ENCODE measurements at regions of chr6 and their contacts with region 1.

Region 1: DNA sequence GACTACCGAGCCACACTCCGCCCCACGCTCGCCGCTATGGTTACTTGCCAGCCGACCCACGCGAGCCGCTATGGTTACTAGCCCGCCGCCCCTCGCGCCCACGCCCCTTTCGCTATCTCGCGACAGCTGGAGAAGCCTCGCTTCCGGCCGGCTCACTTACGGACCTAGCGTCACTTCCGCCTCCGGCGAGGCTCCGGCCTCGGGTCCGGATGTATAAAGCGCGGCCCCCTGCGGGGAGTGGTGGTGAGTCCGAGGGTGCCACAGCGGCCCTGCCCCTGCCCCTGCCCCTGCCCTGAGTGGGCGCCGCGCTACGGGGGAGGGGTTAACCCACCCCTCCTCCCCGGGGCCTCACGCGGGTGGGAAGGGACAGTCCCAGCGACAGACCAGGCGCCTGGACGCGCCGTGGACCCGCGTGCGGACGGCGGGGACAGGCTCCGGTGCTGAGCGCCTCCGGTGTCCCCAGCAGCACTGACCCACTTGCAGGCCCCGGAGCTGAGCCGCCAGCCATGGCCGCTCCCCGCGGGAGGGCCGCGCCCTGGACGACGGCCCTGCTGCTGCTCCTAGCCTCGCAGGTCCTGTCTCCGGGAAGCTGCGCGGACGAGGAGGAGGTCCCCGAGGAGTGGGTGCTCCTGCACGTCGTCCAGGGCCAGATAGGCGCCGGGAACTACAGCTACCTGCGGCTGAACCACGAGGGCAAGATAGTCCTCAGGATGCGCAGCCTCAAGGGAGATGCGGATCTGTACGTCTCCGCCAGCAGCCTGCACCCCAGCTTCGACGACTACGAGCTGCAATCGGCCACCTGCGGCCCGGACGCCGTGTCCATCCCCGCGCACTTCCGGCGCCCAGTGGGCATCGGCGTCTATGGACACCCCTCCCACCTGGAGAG is at the starts of genes C6orf120 and WDR27:
- DNase-seq: peak; percentile 96 to 98 (median 96)
- H3K4me3 ChIP-seq: peak within 1 kb of the TSS; percentile 76 to 98
- H3K4me3 Mint-ChIP-seq: peak within 1 kb of the TSS; percentile 91 to 97 (median 93)
- H3K27ac ChIP-seq: peak within 1 kb of the TSS; percentile 94
- H3K27ac Mint-ChIP-seq: peak within 1 kb of the TSS; percentile 92 to 97 (median 96)
- H3K4me1 ChIP-seq: peaks cover 50% of the 10 kb centered on the region
- H3K4me1 Mint-ChIP-seq: peaks cover 32 to 79% (median 52%) of the 10 kb centered on the region in 4 donors
- H3K27me3 ChIP-seq: no peaks in the 10 kb centered on the region
- H3K27me3 Mint-ChIP-seq: no peaks in the 10 kb centered on the region
- total RNA-seq, gene C6orf120: 32.9 to 35.9 TPM
- total RNA-seq, gene WDR27: 73.0 to 82.8 TPM

Region 2: GRCh38 chr6:168895102-168895812 is 806.9 kb before region 1 on chr6:
- CTCF ChIA-PET with region 1: no interaction called
- POLR2A ChIA-PET with region 1: interaction called, 3 read pairs
- intact Hi-C with region 1: loop called (anchors 5 kb)
- DNase-seq: peak; percentile 71 to 78 (median 74)
- H3K4me3 ChIP-seq: no peak overlapping the region
- H3K4me3 Mint-ChIP-seq: peak overlapping the region; percentile 40 to 87 (median 60)
- H3K27ac ChIP-seq: no peak overlapping the region
- H3K27ac Mint-ChIP-seq: peak overlapping the region in 5 of 7 donors; percentile 8 to 77 (median 53)
- H3K4me1 ChIP-seq: peaks cover 8% of the 10 kb centered on the region
- H3K4me1 Mint-ChIP-seq: peaks cover 9 to 28% (median 11%) of the 10 kb centered on the region in 4 donors
- H3K27me3 ChIP-seq: no peaks in the 10 kb centered on the region
- H3K27me3 Mint-ChIP-seq: peaks cover 3% of the 10 kb centered on the region in 2 donors

Region 3: GRCh38 chr6:169654598-169655391 is 47.4 kb before region 1 on chr6:
- CTCF ChIA-PET with region 1: no interaction called
- POLR2A ChIA-PET with region 1: interaction called, 15 read pairs
- intact Hi-C with region 1: loop called (anchors 1 kb)
- DNase-seq: peak; percentile 73 to 81 (median 78)
- H3K4me3 ChIP-seq: peak overlapping the region in 1 of 2 donors; percentile 81
- H3K4me3 Mint-ChIP-seq: peak overlapping the region; percentile 85 to 93 (median 92)
- H3K27ac ChIP-seq: peak overlapping the region; percentile 47
- H3K27ac Mint-ChIP-seq: peak overlapping the region; percentile 78 to 96 (median 83)
- H3K4me1 ChIP-seq: peaks cover 4% of the 10 kb centered on the region
- H3K4me1 Mint-ChIP-seq: peaks cover 0 to 17% (median 10%) of the 10 kb centered on the region in 4 donors
- H3K27me3 ChIP-seq: no peaks in the 10 kb centered on the region
- H3K27me3 Mint-ChIP-seq: no peaks in the 10 kb centered on the region

Region 4: DNA sequence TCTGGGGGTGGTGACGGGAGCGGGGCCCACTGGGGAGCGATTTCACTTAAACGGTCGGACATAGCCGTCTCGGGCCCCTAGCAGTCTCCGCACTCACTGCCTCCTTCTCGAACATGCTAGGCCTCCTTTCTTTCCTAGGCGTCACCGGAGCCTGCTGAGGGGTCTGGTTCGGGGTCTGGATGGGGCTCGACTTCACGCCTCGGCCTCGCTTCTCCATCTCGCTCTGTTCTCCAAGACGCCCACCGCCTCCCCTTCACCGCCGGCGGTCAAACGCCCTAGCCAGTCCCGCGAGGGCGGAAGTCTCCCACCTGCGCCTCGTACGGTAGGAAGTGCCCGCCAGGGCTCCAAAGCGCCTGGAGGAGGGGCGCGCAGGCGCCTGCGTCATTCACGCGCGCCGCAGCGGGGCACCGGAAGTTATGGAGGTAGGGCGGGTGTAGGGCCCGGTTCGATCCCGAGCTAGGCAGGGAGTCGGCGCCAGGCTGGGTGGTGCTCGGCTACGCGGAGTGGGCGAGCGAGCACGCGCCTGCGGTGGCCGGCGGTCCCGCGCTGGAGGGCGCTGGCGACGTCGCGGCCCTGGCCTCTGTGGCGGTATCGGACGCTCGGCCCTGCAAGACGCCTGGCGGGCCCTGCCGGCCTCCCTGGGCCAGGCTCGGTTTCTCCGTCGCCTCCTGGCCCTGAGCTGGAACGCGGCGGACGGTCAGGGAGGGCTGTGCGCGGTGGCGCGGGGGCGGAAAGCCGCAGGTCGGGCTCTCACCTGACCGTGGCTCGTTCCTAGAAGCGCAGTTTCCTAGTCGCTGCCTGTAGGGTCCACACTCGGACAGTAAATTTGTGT is 49.3 kb after region 1 on chr6 and contains the starts of genes DYNLT2 and ERMARD:
- CTCF ChIA-PET with region 1: interaction called, 4 read pairs
- POLR2A ChIA-PET with region 1: interaction called, 74 read pairs
- intact Hi-C with region 1: loop called (anchors 1 kb)
- DNase-seq: peak; percentile 93 to 96 (median 94)
- H3K4me3 ChIP-seq: peak within 1 kb of the TSS; percentile 80 to 90
- H3K4me3 Mint-ChIP-seq: peak within 1 kb of the TSS; percentile 97 to 100 (median 99)
- H3K27ac ChIP-seq: peak within 1 kb of the TSS; percentile 93
- H3K27ac Mint-ChIP-seq: peak within 1 kb of the TSS; percentile 99 to 100 (median 100)
- H3K4me1 ChIP-seq: peaks cover 24% of the 10 kb centered on the region
- H3K4me1 Mint-ChIP-seq: peaks cover 18 to 39% (median 31%) of the 10 kb centered on the region in 4 donors
- H3K27me3 ChIP-seq: no peaks in the 10 kb centered on the region
- H3K27me3 Mint-ChIP-seq: peaks cover 0 to 1% of the 10 kb centered on the region in 2 donors
- total RNA-seq, gene DYNLT2: 4.6 to 6.9 TPM
- total RNA-seq, gene ERMARD: 33.4 to 41.4 TPM

Region 5: GRCh38 chr6:169940481-169941271 is 238.5 kb after region 1 on chr6:
- CTCF ChIA-PET with region 1: no interaction called
- POLR2A ChIA-PET with region 1: no interaction called
- intact Hi-C with region 1: no loop called
- DNase-seq: no peak
- H3K4me3 ChIP-seq: no peak overlapping the region
- H3K4me3 Mint-ChIP-seq: no peak overlapping the region
- H3K27ac ChIP-seq: no peak overlapping the region
- H3K27ac Mint-ChIP-seq: no peak overlapping the region
- H3K4me1 ChIP-seq: no peaks in the 10 kb centered on the region
- H3K4me1 Mint-ChIP-seq: no peaks in the 10 kb centered on the region
- H3K27me3 ChIP-seq: no peaks in the 10 kb centered on the region
- H3K27me3 Mint-ChIP-seq: peaks cover 15 to 21% of the 10 kb centered on the region in 2 donors

Region 6: DNA sequence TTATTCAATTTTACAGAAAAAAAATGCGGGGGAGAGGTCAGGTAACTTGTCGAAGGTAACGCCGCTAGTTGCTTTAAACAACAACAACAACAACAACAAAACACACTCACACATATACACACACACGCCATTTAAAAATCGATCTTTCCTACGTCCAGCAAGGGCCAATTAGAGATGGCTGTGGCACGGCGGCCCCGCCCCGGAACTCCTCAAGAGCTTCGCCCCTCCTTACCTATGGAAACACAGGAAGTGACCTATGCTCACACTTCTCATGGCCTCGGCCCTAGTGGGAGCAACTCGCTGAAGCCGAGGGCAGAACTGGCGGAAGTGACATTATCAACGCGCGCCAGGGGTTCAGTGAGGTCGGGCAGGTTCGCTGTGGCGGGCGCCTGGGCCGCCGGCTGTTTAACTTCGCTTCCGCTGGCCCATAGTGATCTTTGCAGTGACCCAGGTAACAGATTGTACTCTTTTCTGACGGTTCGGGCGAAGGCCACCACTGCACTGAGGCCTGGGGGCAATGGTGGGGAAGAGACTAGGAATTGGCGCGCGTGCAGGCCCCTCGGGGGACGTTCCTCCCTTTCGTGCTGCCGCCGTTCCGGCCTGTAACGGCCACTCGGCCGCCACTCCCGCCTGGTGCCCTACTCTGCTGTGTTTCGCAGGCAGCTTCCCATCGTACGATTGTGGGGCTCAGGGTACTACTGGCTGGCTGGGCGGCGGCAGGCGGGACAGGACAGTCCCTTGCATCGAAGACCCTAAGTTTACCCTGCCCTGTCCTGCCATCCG is 852.0 kb after region 1 on chr6 and contains the start of gene TBP:
- CTCF ChIA-PET with region 1: no interaction called
- POLR2A ChIA-PET with region 1: interaction called, 34 read pairs
- intact Hi-C with region 1: loop called (anchors 1 kb)
- DNase-seq: peak; percentile 96 to 99 (median 97)
- H3K4me3 ChIP-seq: peak within 1 kb of the TSS; percentile 63 to 85
- H3K4me3 Mint-ChIP-seq: no peak within 1 kb of the TSS
- H3K27ac ChIP-seq: peak within 1 kb of the TSS; percentile 94
- H3K27ac Mint-ChIP-seq: no peak within 1 kb of the TSS
- H3K4me1 ChIP-seq: peaks cover 53% of the 10 kb centered on the region
- H3K4me1 Mint-ChIP-seq: peaks cover 10 to 37% (median 22%) of the 10 kb centered on the region in 4 donors
- H3K27me3 ChIP-seq: no peaks in the 10 kb centered on the region
- H3K27me3 Mint-ChIP-seq: no peaks in the 10 kb centered on the region
- total RNA-seq, gene TBP: 27.2 to 27.5 TPM

Measured in CD4-positive, alpha-beta memory T cell (primary cell).